HEK293 (cell line): ENCODE measurements at regions of chr6 and their contacts with region 1.

Region 1: GRCh38 chr6:99330159-99330558 is 19.3 kb downstream of the FAXC start:
- H3K4me3 ChIP-seq: no peak overlapping the region
- H3K27ac ChIP-seq: no peak overlapping the region
- H3K4me1 ChIP-seq: no peaks in the 10 kb centered on the region
- CTCF ChIP-seq: no peak

Region 2: GRCh38 chr6:99312354-99312753 is 17.8 kb before region 1 on chr6:
- CTCF ChIA-PET with region 1: interaction called, 15 read pairs
- POLR2A ChIA-PET with region 1: interaction called, 3 read pairs
- H3K4me3 ChIP-seq: no peak overlapping the region
- H3K27ac ChIP-seq: no peak overlapping the region
- H3K4me1 ChIP-seq: peaks cover 4% of the 10 kb centered on the region; the same call in 1 of the 2 replicates
- CTCF ChIP-seq: no peak

Region 3: GRCh38 chr6:99344289-99344688 is 14.1 kb after region 1 on chr6:
- CTCF ChIA-PET with region 1: interaction called, 125 read pairs
- POLR2A ChIA-PET with region 1: interaction called, 6 read pairs
- H3K4me3 ChIP-seq: no peak overlapping the region
- H3K27ac ChIP-seq: no peak overlapping the region
- H3K4me1 ChIP-seq: no peaks in the 10 kb centered on the region
- CTCF ChIP-seq: no peak

Region 4: DNA sequence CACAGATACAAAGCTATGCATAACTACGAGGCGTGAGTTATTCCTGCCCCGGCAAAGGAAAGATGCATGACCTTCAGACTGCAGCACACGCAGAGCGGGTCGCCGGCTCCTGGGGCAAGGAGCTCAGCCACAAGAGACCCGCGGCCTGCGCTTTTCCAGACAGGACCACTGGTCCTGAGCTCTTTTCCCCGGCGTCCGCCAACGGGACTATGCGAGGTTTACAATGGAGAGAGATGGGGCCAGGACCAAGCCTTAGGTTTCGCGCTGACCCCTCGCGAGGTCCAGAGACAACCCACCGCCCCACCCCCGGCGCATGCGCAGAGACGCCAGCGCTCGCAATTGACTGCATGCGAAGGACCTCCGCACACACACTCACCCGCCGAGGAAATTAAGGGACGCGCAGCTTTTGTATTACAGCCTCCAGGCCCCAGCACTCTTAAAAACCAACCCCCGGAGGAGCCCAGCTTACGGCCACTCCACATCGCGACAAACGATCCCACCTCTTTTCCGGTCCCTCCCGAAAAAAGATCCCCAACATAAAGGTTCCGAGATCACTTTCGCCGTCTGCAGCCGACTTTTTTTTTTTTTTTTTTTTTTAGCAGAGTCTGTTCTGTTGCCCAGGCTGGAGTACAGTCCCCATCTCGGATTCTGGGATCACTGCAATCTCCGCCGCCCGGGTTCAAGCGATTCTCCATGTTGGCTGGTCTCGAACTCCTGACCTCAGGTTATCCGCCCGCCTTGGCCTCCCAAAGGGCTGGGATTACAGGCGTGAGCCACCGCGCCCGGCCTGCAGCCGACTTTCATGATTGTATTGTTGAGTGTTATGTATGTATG is 63.8 kb after region 1 on chr6 and contains the start of gene COQ3:
- CTCF ChIA-PET with region 1: interaction called, 14 read pairs
- POLR2A ChIA-PET with region 1: interaction called, 11 read pairs
- H3K4me3 ChIP-seq: peak within 1 kb of the TSS; percentile 71
- H3K27ac ChIP-seq: peak within 1 kb of the TSS; percentile 64
- H3K4me1 ChIP-seq: no peaks in the 10 kb centered on the region
- CTCF ChIP-seq: no peak

Region 5: DNA sequence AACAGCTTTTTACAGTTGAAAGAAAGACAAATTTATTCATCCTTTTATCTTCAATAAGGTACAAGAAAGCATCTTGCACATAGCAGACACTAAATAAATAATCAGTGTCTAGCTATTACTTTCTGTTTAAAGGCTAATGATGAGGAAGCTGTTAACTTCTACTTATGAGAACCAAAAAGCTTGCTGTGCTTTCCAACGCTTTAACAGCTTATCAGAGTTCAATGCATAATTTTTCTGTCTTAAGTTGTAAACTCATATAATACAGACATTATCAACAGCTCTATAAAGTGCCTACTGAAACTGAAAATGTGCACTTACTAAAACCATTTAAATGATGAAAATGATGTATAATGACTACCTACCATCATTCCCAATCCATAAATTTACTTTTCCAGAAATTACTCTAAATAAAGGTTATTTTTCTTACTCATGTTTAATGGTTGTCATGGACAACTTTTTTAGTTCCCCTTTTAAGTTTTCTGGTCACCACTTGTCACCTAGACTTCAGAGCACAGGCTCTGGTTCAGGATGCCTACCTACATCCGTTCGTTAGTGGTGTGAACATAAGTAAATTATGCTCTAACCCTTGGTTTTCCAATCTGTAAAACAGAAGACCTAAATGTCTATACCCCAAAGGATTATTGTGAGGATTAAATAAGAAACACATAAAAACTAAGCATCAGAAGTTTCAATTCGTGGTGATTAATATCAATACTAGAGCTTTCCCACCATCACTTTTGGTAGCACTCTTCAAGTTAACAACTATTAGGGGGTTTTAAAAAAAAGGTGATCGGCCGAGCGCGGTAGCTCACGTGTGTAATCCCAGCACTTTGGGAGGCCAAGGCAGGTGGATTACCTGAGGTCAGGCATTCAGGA is 87.0 kb after region 1 on chr6:
- CTCF ChIA-PET with region 1: interaction called, 13 read pairs
- POLR2A ChIA-PET with region 1: no interaction called
- H3K4me3 ChIP-seq: no peak overlapping the region
- H3K27ac ChIP-seq: no peak overlapping the region
- H3K4me1 ChIP-seq: peaks cover 4% of the 10 kb centered on the region; the same call in 1 of the 2 replicates
- CTCF ChIP-seq: no peak

Region 6: DNA sequence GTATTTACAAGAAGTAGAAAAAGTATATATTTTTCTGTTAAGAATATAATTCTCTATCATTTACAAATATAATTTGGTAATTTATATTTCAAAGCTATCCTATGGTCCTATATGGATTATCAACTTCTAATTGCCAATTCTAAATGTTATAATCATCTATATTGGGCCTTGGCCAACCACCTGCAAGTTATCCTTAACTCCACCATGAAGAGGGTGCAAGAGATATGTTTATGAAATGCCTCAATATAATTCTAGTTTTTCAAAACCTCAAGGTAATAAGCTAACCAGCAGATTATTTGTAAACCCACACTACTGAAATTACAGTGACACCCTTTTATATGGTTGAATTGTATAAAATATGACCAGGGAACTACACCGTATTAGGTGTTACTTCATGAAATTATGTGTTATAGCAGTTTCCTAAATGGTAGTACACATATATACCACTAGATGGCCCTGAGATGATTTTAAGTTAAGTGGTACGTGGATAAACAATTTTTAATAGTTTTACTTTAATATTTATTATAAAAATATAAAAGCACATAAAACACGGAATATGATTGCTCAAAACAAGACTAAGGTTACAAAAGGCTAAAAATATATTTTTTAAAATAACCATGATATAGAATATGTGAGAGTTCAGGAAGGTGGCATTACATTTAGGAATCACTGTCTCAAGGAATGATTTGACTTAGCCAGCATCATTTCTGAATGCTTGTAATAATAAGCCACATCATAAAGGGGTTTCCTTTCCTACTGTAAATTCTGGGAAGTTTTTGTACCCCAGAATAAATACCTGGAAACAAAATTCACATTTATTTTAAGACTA is 104.8 kb after region 1 on chr6:
- CTCF ChIA-PET with region 1: interaction called, 15 read pairs
- POLR2A ChIA-PET with region 1: no interaction called
- H3K4me3 ChIP-seq: no peak overlapping the region
- H3K27ac ChIP-seq: no peak overlapping the region
- H3K4me1 ChIP-seq: no peaks in the 10 kb centered on the region
- CTCF ChIP-seq: no peak

Region 7: DNA sequence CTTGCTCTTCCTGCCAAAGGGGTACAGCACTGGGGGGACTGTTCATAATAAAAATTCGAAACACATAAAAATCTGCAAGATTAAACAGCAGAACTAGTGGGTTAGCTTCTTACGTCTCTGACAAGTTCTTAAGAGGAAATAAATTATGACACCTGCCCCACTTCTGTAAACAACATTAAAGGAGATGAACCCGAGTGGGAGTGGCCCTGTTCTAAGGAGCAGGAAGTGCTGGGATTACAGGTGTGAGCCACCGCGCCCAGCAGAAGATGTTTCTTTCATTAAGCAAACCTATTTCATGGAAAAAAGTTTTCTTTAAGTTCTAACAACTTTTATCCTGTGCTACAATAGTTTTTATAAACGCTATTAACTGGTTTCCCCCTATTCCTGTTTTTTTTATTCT is 160.4 kb after region 1 on chr6:
- CTCF ChIA-PET with region 1: no interaction called
- POLR2A ChIA-PET with region 1: no interaction called
- H3K4me3 ChIP-seq: no peak overlapping the region
- H3K27ac ChIP-seq: no peak overlapping the region
- H3K4me1 ChIP-seq: peaks cover 14% of the 10 kb centered on the region
- CTCF ChIP-seq: no peak

Region 8: DNA sequence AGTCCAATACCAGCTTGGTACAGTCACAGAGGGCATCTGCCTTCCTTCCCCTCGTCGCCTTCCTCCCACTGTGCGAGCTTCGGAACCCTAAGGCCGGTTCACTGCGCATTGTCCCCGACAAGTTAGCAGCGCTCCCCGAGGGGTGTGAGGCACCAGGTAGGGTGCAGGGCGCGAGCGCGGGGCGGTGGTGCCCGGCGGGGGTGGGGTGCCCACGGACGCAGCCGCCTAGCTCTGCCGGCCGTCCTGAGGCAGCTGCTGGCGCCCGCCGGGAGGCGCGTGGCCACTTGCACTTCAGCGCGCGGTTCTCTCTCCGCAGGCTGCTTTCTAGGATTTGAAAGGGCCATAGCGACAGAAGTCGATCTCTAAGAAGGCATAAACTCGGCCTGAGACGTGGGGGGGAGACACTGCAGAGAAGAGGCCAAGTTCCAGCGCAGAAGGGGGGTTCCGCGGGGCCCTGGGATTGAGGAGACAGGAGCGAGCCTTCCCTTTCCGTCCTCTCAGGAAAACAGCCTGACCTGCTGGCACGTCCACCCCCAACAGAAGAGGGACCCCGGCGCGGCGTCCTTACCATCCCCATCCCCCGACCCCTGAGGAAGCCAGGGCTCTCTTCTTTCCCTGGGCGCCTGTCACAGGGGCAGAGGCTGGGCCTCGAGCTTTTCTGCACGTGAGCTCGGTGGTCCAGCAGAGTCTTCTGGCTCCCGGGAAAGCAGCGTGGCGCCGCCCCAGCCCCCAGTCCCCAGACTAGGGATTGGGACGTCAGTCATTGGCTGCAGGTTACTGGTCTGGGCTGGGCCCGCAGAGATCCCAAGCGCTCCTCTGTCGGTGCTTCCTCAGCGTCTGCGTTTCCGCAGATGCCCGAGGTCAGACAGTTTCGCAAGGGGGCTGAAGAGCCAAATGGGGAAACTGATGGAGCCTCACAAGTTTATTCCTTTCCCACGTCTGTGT is 260.8 kb after region 1 on chr6:
- CTCF ChIA-PET with region 1: no interaction called
- POLR2A ChIA-PET with region 1: no interaction called
- H3K4me3 ChIP-seq: no peak overlapping the region
- H3K27ac ChIP-seq: no peak overlapping the region
- H3K4me1 ChIP-seq: no peaks in the 10 kb centered on the region; the same call in 1 of the 2 replicates
- CTCF ChIP-seq: no peak